ENCODE measurements at regions of chr11 and their contacts with region 1.

Region 1: DNA sequence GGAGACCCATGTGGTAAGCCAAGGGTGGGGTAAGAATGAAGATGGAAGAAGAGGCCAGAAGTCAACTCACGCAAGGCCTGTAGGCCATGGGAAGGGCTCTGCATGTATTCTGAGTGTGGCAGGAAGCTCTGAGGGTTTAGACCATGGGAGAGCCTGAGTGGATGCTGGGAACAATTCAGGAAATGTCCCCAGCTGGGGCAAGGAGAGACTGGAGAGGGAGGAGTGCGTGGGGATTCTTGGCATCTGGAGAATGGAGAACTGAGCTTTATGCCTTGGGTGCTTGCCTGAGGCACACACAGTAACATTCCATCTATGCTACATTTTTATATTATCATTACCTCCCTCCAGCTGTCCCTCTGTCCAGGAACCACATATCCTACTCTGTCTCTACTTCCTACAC is 50.4 kb upstream of the CD82 start:
- DNase-seq: no peak
- ATAC-seq: no peak
- H3K4me3 ChIP-seq: no peak overlapping the region
- H3K27ac ChIP-seq: no peak overlapping the region
- H3K4me1 ChIP-seq: no peaks in the 10 kb centered on the region
- H3K27me3 ChIP-seq: peaks cover 4% of the 10 kb centered on the region
- CTCF ChIP-seq: no peak

Region 2: DNA sequence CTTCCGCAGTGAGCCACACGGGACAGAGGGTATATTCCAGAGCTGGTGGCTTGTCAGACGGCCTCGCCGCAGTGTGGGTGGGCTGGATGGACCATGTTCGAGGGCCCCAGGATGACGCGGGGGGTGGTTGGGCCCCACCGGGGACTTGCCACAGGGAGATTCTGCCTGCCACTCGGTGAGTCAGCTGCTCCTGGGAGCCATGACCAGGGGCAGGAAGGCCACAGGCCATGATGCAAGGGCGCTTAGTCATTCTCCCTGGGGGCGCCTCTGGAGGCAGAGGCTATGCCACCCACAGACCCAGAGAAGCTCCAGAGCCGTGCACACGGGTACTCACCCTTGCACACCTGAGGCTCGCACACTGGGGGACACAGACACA is 213.2 kb before region 1 on chr11:
- CTCF ChIA-PET with region 1: interaction called, 13 read pairs
- POLR2A ChIA-PET with region 1: no interaction called
- in situ Hi-C with region 1: no loop called
- intact Hi-C with region 1: no loop called
- DNase-seq: no peak
- ATAC-seq: peak; percentile 63
- H3K4me3 ChIP-seq: no peak overlapping the region
- H3K27ac ChIP-seq: no peak overlapping the region
- H3K4me1 ChIP-seq: peaks cover 12% of the 10 kb centered on the region
- H3K27me3 ChIP-seq: peaks cover 3% of the 10 kb centered on the region; the same call in 1 of the 2 replicates
- CTCF ChIP-seq: no peak

Region 3: GRCh38 chr11:44388828-44389657 is 126.0 kb before region 1 on chr11:
- CTCF ChIA-PET with region 1: no interaction called
- POLR2A ChIA-PET with region 1: no interaction called
- in situ Hi-C with region 1: no loop called
- intact Hi-C with region 1: no loop called
- DNase-seq: no peak
- ATAC-seq: no peak
- H3K4me3 ChIP-seq: peak overlapping the region in 1 of 2 experiments; percentile 17; a peak in 2 of 4 replicates
- H3K27ac ChIP-seq: no peak overlapping the region
- H3K4me1 ChIP-seq: no peaks in the 10 kb centered on the region
- H3K27me3 ChIP-seq: peaks cover 3% of the 10 kb centered on the region
- CTCF ChIP-seq: no peak

Region 4: DNA sequence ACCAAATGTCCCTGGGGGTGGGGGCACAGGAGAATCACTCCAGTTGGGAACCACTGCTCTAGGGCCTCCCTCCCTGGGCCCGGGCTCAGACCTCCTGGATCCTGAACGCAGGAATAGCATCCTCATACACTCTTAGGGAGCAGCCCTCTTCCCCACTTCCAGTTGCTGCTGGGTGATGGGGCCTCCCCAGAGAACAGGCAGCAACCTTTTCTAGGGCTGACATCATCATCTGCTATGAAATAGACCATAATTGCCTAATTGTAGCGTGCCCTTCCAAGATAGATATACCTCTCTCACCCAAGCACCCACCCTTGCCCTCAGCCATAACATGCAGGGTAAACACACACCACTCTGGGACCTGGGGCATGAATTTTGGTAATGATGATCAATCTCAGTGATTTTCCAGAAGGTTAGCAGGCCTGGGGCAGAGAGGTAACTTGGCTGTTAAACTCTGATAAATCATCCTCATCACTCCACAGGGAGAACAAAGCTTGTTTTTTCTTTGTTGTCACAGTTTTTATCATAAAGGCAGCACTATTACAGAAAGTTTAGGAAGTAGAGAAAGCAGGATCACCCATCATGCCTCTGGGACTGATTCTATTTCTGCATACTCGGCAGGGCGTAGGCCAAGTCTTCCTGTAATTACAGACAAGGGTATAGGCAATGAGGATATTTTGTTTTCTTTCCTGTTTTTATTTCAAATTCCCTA is 543.0 kb after region 1 on chr11:
- CTCF ChIA-PET with region 1: no interaction called
- POLR2A ChIA-PET with region 1: no interaction called
- in situ Hi-C with region 1: no loop called
- intact Hi-C with region 1: no loop called
- DNase-seq: no peak
- ATAC-seq: no peak
- H3K4me3 ChIP-seq: no peak overlapping the region
- H3K27ac ChIP-seq: no peak overlapping the region
- H3K4me1 ChIP-seq: no peaks in the 10 kb centered on the region
- H3K27me3 ChIP-seq: no peaks in the 10 kb centered on the region
- CTCF ChIP-seq: no peak